Common myeloid progenitor, CD34-positive (primary cell): ENCODE measurements at regions of chr15 and their contacts with region 1.

Region 1: DNA sequence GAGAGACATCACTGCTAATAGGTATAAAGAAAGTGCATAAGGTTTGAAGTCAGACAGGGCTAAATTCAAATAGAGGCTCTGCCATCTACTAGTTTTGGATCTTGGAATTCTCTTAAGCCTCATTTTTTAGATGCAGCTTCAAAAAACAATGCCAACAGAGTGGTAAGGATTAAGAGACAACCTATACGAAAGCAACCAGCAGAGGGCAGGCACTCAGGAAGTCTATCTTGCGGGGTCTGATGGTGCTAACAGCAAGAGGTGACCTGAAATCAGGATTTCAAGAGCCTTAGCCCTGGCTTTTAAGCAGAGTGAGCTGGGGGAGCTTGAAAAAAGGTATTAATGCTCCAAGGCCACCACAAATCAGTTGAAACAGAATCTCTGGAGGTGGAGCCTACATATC is 40.7 kb downstream of the LDHAL6B start:
- DNase-seq: peak; percentile 77 to 88 (median 84)
- H3K4me3 ChIP-seq: no peak overlapping the region
- H3K27ac ChIP-seq: no peak overlapping the region
- H3K4me1 ChIP-seq: peaks cover 0 to 4% (median 0%) of the 10 kb centered on the region in 4 experiments
- H3K27me3 ChIP-seq: no peaks in the 10 kb centered on the region

Region 2: DNA sequence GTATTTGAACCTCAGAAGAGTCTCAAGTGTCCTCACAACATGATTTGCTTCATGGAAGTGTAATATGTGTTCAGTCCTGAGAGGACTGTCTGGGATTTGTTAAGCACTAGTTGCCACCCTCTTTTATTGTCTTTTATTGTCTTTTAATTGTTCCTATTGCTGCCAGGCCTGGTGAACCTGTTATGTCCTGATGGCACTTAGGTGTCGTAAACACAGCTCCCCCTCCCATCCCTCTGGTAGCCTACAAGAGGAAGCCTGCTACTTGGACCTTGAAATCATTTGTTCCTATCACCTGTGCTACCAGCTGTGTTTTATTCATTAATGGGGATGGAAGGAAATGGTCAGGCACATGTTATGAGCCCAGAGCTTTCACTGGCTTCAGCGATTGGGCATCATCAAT is 123.1 kb before region 1 on chr15:
- CTCF ChIA-PET with region 1: no interaction called
- POLR2A ChIA-PET with region 1: no interaction called
- DNase-seq: no peak
- H3K4me3 ChIP-seq: no peak overlapping the region
- H3K27ac ChIP-seq: no peak overlapping the region
- H3K4me1 ChIP-seq: no peaks in the 10 kb centered on the region
- H3K27me3 ChIP-seq: no peaks in the 10 kb centered on the region

Region 3: DNA sequence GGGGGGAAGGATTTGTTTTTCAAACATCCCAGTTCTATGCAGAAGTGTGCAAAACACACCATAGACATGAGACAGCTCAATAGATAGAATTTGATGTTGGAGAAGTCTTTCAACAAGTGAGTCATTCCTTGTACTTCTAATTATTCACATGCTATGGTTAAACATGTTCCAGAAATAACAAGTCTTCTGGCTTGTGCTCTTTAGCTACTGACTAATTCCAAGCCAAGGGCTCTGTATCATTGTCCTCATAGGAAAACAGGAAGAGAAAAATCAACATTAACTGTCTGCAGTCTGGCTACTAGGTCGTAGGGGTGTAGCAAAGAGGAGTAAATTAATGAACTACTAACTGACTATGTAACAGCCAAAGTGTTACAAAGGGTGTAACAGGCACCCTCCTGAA is 14.9 kb before region 1 on chr15:
- CTCF ChIA-PET with region 1: interaction called, 17 read pairs
- POLR2A ChIA-PET with region 1: no interaction called
- DNase-seq: no peak
- H3K4me3 ChIP-seq: no peak overlapping the region
- H3K27ac ChIP-seq: no peak overlapping the region
- H3K4me1 ChIP-seq: peaks cover 0 to 9% (median 1%) of the 10 kb centered on the region in 4 experiments
- H3K27me3 ChIP-seq: no peaks in the 10 kb centered on the region

Region 4: GRCh38 chr15:59492389-59493377 is 245.3 kb after region 1 on chr15:
- CTCF ChIA-PET with region 1: interaction called, 43 read pairs
- POLR2A ChIA-PET with region 1: no interaction called
- DNase-seq: peak; percentile 55 to 77 (median 74)
- H3K4me3 ChIP-seq: no peak overlapping the region
- H3K27ac ChIP-seq: no peak overlapping the region
- H3K4me1 ChIP-seq: peaks cover 0 to 2% (median 0%) of the 10 kb centered on the region in 4 experiments
- H3K27me3 ChIP-seq: no peaks in the 10 kb centered on the region